CD8-positive, alpha-beta T cell (primary cell): ENCODE measurements at regions of chr6 and their contacts with region 1.

Region 1: DNA sequence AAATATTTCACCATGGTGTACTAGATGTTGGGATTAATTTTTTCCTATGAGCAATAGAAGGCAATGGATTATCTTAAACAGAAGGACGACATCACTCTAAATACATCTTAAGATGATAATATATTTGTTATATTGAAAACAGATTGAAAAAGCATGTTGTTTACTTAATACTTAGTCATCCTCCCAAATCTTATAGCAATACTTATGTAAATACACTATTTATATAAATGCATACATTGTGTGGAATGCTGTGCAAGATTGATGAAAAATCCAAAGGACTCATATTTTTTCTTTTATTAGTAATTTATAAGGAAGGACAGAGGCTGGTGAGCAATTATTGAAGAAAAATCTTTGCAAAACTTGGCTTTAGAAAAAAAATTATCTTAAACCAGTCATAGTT is 593.5 kb downstream of the MMUT start:
- DNase-seq: no peak
- ATAC-seq: no peak
- H3K4me3 ChIP-seq: no peak overlapping the region
- H3K4me3 Mint-ChIP-seq: no peak overlapping the region
- H3K27ac ChIP-seq: no peak overlapping the region
- H3K27ac Mint-ChIP-seq: no peak overlapping the region
- H3K4me1 ChIP-seq: no peaks in the 10 kb centered on the region
- H3K4me1 Mint-ChIP-seq: no peaks in the 10 kb centered on the region
- H3K27me3 ChIP-seq: no peaks in the 10 kb centered on the region
- H3K27me3 Mint-ChIP-seq: no peaks in the 10 kb centered on the region
- CTCF ChIP-seq: no peak

Region 2: DNA sequence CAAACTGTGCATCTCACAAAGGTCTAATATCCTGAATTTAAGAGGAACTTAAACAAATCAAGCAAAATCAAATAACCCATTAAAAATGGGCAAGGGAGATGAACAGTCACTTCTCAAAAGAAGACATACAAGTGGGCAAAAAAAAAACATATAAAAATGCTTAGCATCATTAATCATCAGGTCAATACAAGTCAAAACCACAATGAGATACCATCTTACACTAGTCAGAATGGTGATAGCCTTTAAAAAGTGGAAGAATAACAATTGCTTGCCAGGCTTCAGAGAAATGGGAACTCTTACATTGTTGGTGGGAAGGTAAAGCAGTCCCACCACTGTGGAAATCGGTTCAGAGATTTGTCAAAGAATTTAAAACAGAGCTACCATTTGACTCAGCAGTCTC is 111.9 kb before region 1 on chr6:
- CTCF ChIA-PET with region 1: no interaction called
- POLR2A ChIA-PET with region 1: no interaction called
- intact Hi-C with region 1: no loop called
- DNase-seq: no peak
- ATAC-seq: no peak
- H3K4me3 ChIP-seq: no peak overlapping the region
- H3K4me3 Mint-ChIP-seq: no peak overlapping the region
- H3K27ac ChIP-seq: no peak overlapping the region
- H3K27ac Mint-ChIP-seq: no peak overlapping the region
- H3K4me1 ChIP-seq: no peaks in the 10 kb centered on the region
- H3K4me1 Mint-ChIP-seq: no peaks in the 10 kb centered on the region
- H3K27me3 ChIP-seq: no peaks in the 10 kb centered on the region
- H3K27me3 Mint-ChIP-seq: no peaks in the 10 kb centered on the region
- CTCF ChIP-seq: no peak

Region 3: GRCh38 chr6:48893048-48893447 is 23.5 kb after region 1 on chr6:
- CTCF ChIA-PET with region 1: no interaction called
- POLR2A ChIA-PET with region 1: no interaction called
- intact Hi-C with region 1: loop called in 1 of 2 experiments (anchors 2 kb)
- DNase-seq: no peak
- ATAC-seq: no peak
- H3K4me3 ChIP-seq: no peak overlapping the region
- H3K4me3 Mint-ChIP-seq: no peak overlapping the region
- H3K27ac ChIP-seq: no peak overlapping the region
- H3K27ac Mint-ChIP-seq: no peak overlapping the region
- H3K4me1 ChIP-seq: no peaks in the 10 kb centered on the region
- H3K4me1 Mint-ChIP-seq: no peaks in the 10 kb centered on the region
- H3K27me3 ChIP-seq: no peaks in the 10 kb centered on the region
- H3K27me3 Mint-ChIP-seq: no peaks in the 10 kb centered on the region
- CTCF ChIP-seq: no peak

Region 4: GRCh38 chr6:48978016-48978415 is 108.4 kb after region 1 on chr6:
- CTCF ChIA-PET with region 1: no interaction called
- POLR2A ChIA-PET with region 1: no interaction called
- intact Hi-C with region 1: no loop called
- DNase-seq: no peak
- ATAC-seq: no peak
- H3K4me3 ChIP-seq: no peak overlapping the region
- H3K4me3 Mint-ChIP-seq: no peak overlapping the region
- H3K27ac ChIP-seq: no peak overlapping the region
- H3K27ac Mint-ChIP-seq: no peak overlapping the region
- H3K4me1 ChIP-seq: no peaks in the 10 kb centered on the region
- H3K4me1 Mint-ChIP-seq: no peaks in the 10 kb centered on the region
- H3K27me3 ChIP-seq: no peaks in the 10 kb centered on the region
- H3K27me3 Mint-ChIP-seq: no peaks in the 10 kb centered on the region
- CTCF ChIP-seq: no peak

Region 5: DNA sequence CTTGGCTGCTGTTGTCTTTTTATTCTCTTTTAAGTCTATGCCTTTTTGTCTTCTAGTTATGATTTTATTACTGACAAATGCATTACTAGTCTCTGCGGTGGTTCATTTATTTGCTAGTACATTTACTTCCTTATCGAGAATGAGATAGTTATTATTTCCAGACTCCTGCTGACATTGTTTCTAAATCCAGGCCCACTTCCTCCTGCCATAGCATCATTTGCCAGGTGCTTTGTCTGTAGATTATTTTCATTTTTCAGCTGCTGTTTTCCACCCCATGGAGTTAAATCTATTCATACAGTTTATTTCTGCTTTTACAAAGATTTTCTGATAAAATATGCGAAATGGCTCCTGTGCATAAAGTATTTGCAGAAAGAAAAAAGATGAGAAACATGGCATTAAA is 133.8 kb after region 1 on chr6:
- CTCF ChIA-PET with region 1: no interaction called
- POLR2A ChIA-PET with region 1: no interaction called
- intact Hi-C with region 1: no loop called
- DNase-seq: no peak
- ATAC-seq: no peak
- H3K4me3 ChIP-seq: no peak overlapping the region
- H3K4me3 Mint-ChIP-seq: no peak overlapping the region
- H3K27ac ChIP-seq: no peak overlapping the region
- H3K27ac Mint-ChIP-seq: no peak overlapping the region
- H3K4me1 ChIP-seq: no peaks in the 10 kb centered on the region
- H3K4me1 Mint-ChIP-seq: no peaks in the 10 kb centered on the region
- H3K27me3 ChIP-seq: no peaks in the 10 kb centered on the region
- H3K27me3 Mint-ChIP-seq: no peaks in the 10 kb centered on the region
- CTCF ChIP-seq: no peak